ENCODE measurements at regions of chr10 and their contacts with region 1.

Region 1: GRCh38 chr10:63268798-63269503 is 135.8 kb downstream of the NRBF2 start:
- DNase-seq: peak; percentile 97
- H3K4me3 Mint-ChIP-seq: peak overlapping the region; percentile 86
- H3K27ac Mint-ChIP-seq: peak overlapping the region; percentile 96
- H3K4me1 Mint-ChIP-seq: peaks cover 5% of the 10 kb centered on the region
- H3K27me3 Mint-ChIP-seq: no peaks in the 10 kb centered on the region
- CTCF ChIP-seq: peak; percentile 21

Region 2: GRCh38 chr10:63217120-63217605 is 51.8 kb before region 1 on chr10:
- CTCF ChIA-PET with region 1: interaction called, 4 read pairs
- POLR2A ChIA-PET with region 1: interaction called, 30 read pairs
- intact Hi-C with region 1: loop called (anchors 2 kb)
- DNase-seq: peak; percentile 66
- H3K4me3 Mint-ChIP-seq: no peak overlapping the region
- H3K27ac Mint-ChIP-seq: peak overlapping the region; percentile 39
- H3K4me1 Mint-ChIP-seq: peaks cover 10% of the 10 kb centered on the region
- H3K27me3 Mint-ChIP-seq: no peaks in the 10 kb centered on the region
- CTCF ChIP-seq: peak; percentile 56

Region 3: GRCh38 chr10:63236113-63236935 is 32.6 kb before region 1 on chr10:
- CTCF ChIA-PET with region 1: no interaction called
- POLR2A ChIA-PET with region 1: interaction called, 61 read pairs
- intact Hi-C with region 1: loop called (anchors 2 kb)
- DNase-seq: peak; percentile 85
- H3K4me3 Mint-ChIP-seq: peak overlapping the region; percentile 19
- H3K27ac Mint-ChIP-seq: peak overlapping the region; percentile 64
- H3K4me1 Mint-ChIP-seq: peaks cover 24% of the 10 kb centered on the region
- H3K27me3 Mint-ChIP-seq: no peaks in the 10 kb centered on the region
- CTCF ChIP-seq: no peak

Region 4: GRCh38 chr10:63256009-63256773 is 12.8 kb before region 1 on chr10:
- CTCF ChIA-PET with region 1: interaction called, 4 read pairs
- POLR2A ChIA-PET with region 1: interaction called, 94 read pairs
- intact Hi-C with region 1: no loop called
- DNase-seq: peak; percentile 35
- H3K4me3 Mint-ChIP-seq: no peak overlapping the region
- H3K27ac Mint-ChIP-seq: peak overlapping the region; percentile 6
- H3K4me1 Mint-ChIP-seq: peaks cover 39% of the 10 kb centered on the region
- H3K27me3 Mint-ChIP-seq: no peaks in the 10 kb centered on the region
- CTCF ChIP-seq: no peak

Region 5: DNA sequence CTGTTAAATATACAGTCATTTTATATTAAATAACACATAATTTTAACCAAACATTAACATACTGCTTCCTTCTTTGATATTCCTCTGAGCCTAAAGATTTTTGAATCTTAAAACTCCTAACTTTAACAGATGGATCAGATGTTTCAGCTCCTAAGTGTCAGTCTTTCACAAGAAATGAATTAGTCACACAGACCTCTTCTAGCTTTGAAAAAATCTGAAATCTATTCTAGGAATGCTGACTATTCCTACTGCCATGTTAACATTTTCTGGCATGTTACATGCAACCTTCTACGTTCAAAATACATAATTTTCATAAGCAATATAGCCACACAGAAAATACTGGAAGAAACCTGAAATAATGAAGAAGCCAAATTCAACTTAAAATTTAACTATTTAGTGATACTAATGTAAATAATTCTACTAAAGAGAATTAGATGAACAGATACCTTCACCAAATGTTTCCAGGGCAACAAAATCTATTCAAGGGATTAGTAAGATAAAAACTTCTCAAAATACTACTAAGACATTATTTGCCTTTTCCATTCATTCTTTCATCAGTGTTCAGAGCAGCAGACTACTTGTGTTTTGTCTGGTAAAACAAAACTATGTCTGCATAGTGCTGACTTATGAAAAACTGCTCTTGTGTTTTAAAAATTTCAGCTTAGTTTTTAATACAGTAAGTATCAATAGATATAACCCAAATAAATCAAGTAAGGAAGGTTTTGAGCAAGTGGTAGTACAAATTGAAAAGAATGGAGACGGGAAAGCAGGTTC is 187.7 kb after region 1 on chr10:
- CTCF ChIA-PET with region 1: interaction called, 3 read pairs
- POLR2A ChIA-PET with region 1: interaction called, 31 read pairs
- intact Hi-C with region 1: no loop called
- DNase-seq: peak; percentile 52
- H3K4me3 Mint-ChIP-seq: peak overlapping the region; percentile 28
- H3K27ac Mint-ChIP-seq: peak overlapping the region; percentile 49
- H3K4me1 Mint-ChIP-seq: peaks cover 15% of the 10 kb centered on the region
- H3K27me3 Mint-ChIP-seq: no peaks in the 10 kb centered on the region
- CTCF ChIP-seq: no peak

Region 6: DNA sequence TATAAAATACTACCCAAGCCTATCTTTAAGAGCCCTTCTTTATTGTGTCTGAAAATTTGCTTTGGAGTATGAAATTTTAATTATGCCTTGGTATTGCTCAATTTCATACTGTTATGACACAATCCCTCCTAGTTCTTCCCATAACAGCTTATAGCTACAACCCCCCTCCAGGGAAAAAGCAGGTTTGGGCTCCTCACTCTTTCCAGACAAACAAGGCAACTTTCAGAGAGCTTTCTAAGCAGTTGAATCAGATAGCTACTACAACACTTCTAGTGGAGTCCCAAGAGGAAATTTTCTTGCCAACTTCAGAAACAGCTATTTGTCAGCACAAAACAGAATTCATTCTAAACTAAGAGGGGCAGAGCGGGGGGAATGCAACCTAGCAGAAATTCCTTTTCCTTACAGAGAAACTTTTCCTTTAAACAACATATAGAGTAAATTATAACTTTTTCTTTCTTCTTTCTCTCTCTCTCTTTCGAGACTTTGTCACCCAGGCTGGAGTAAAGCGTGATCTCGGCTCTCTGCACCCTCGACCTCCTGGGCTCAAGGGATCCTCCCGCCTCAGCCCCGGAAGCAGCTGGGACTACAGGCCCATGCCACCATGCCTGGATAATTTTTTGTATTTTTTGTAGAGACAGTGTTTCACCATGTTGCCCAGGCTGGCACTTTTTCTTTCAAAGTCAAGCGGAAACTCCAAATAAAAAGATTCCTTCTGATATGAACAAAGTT is 222.8 kb after region 1 on chr10:
- CTCF ChIA-PET with region 1: interaction called, 3 read pairs
- POLR2A ChIA-PET with region 1: interaction called, 38 read pairs
- intact Hi-C with region 1: no loop called
- DNase-seq: peak; percentile 91
- H3K4me3 Mint-ChIP-seq: peak overlapping the region; percentile 38
- H3K27ac Mint-ChIP-seq: peak overlapping the region; percentile 72
- H3K4me1 Mint-ChIP-seq: peaks cover 17% of the 10 kb centered on the region
- H3K27me3 Mint-ChIP-seq: no peaks in the 10 kb centered on the region
- CTCF ChIP-seq: no peak

Region 7: DNA sequence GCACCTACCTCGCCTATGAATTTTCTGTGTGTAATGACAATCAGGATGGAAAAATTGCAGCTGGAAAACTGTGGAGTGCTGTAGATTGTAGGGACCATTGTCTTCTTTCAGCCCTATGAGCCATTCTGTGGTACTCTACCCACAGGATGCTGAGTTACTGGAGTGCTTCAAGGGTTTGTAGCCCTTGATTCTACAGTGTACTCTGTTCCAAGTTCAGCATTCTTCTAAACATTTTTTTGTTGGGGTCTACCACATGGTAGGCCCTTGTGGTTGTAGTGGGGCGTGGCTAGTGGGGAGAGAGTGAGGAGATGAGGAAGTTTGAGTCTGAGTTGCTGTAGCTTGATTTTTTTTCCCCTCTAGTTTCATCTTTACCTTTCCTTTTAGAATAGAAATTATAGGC is 285.7 kb after region 1 on chr10:
- CTCF ChIA-PET with region 1: no interaction called
- POLR2A ChIA-PET with region 1: interaction called, 17 read pairs
- intact Hi-C with region 1: no loop called
- DNase-seq: peak; percentile 12
- H3K4me3 Mint-ChIP-seq: peak overlapping the region; percentile 56
- H3K27ac Mint-ChIP-seq: peak overlapping the region; percentile 90
- H3K4me1 Mint-ChIP-seq: peaks cover 41% of the 10 kb centered on the region
- H3K27me3 Mint-ChIP-seq: no peaks in the 10 kb centered on the region
- CTCF ChIP-seq: no peak